ENCODE measurements at regions of chr2 and their contacts with region 1.

Region 1: GRCh38 chr2:200963124-200963917 is at the start of gene ORC2:
- DNase-seq: peak; percentile 96
- ATAC-seq: peak; percentile 96
- H3K4me3 ChIP-seq: peak within 1 kb of the TSS; percentile 79 to 96 (median 86)
- H3K27ac ChIP-seq: peak within 1 kb of the TSS; percentile 85
- H3K4me1 ChIP-seq: peaks cover 52% of the 10 kb centered on the region
- H3K27me3 ChIP-seq: no peaks in the 10 kb centered on the region; a peak in 1 of 5 replicates
- CTCF ChIP-seq: peak; percentile 92
- EP300 ChIP-seq: peak in 1 of 2 experiments; percentile 30; a peak in 2 of 4 replicates
- POLR2A ChIP-seq: peak; percentile 74 to 85
- RAD21 ChIP-seq: peak; percentile 77
- total RNA-seq, gene ORC2: 58.3 and 73.5 TPM in 2 replicates

Region 2: GRCh38 chr2:200864176-200864976 is 98.9 kb before region 1 on chr2 and contains the start of gene CLK1:
- CTCF ChIA-PET with region 1: no interaction called
- POLR2A ChIA-PET with region 1: interaction called, 22 read pairs
- in situ Hi-C with region 1: no loop called
- intact Hi-C with region 1: no loop called
- DNase-seq: peak; percentile 89
- ATAC-seq: peak; percentile 80
- H3K4me3 ChIP-seq: peak within 1 kb of the TSS; percentile 91 to 99 (median 97)
- H3K27ac ChIP-seq: peak within 1 kb of the TSS; percentile 98
- H3K4me1 ChIP-seq: peaks cover 55% of the 10 kb centered on the region
- H3K27me3 ChIP-seq: no peaks in the 10 kb centered on the region; a peak in 1 of 5 replicates
- CTCF ChIP-seq: no peak; the same call in 1 of the 2 replicates
- EP300 ChIP-seq: peak; percentile 27 to 54; a peak in 2 of 4 replicates
- POLR2A ChIP-seq: peak; percentile 99 to 100
- RAD21 ChIP-seq: peak; percentile 54
- total RNA-seq, gene CLK1: 35.2 and 66.6 TPM in 2 replicates

Region 3: DNA sequence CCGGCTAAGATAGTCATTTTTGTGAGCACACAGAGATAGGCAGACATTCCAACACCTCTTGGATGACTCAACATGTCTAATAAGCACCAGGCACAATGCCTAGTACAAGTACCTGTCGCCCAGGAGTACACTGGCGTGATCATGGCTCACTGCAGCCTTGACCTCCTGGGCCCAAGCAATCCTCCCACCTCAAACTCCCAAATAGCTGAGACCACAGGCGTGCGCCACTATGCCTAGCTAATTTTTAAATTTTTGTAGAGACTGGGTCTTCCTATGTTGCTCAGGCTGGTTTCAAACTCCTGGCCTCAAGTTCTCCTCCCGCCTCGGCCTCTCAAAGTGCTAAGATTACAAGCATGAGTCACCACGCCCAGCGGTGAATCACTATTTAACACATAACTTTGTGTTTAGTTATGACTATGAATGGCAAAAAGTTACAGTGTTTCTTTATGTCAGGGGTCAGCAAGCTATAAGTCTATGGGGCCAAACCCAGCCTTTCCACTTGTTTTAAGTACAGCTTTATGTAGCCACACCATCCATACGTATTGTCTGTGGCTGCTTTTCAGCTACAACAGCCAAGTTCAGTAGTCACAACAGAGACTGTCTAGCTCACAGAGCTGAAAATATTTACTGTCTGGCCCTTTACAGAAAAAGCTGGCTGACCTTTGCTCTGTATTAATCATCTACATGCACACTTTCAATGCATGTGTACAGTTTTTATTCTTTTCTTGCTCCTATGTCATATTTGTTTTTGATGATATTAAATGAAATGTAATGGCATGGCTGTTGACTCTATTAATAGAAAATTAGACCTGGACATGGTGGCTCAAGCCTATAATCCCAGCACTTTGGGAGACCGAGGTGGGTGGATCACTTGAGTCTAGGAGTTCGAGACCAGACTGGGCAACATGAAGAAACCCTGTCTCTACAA is 18.6 kb before region 1 on chr2:
- CTCF ChIA-PET with region 1: no interaction called
- POLR2A ChIA-PET with region 1: interaction called, 41 read pairs
- in situ Hi-C with region 1: no loop called
- intact Hi-C with region 1: no loop called
- DNase-seq: peak; percentile 82
- ATAC-seq: peak; percentile 93
- H3K4me3 ChIP-seq: no peak overlapping the region
- H3K27ac ChIP-seq: peak overlapping the region; percentile 17
- H3K4me1 ChIP-seq: peaks cover 20% of the 10 kb centered on the region
- H3K27me3 ChIP-seq: no peaks in the 10 kb centered on the region
- CTCF ChIP-seq: no peak
- EP300 ChIP-seq: 0 out of 4 replicates have a peak, but pooled peaks of 1 of the 2 experiments have one; percentile 24
- POLR2A ChIP-seq: no peak
- RAD21 ChIP-seq: no peak

Region 4: DNA sequence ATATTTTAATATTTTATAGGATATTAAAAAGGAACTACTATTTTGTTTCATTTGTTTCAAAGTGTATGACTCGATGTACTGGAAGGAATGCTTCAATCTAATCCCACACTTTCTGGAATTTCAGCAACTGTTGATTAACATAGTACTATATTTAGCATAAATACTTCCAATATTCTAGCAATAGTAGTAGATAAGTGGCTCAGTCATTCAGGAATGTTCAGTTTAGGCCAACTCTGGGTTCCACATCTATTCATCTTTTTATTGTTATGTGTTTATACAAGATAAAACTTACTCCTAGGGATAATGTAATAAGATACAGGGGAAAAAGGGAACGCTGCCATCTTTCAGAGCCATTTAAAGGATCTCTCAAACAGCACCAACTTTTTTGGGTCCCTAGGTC is 22.5 kb after region 1 on chr2:
- CTCF ChIA-PET with region 1: no interaction called
- POLR2A ChIA-PET with region 1: interaction called, 16 read pairs
- in situ Hi-C with region 1: no loop called
- intact Hi-C with region 1: no loop called
- DNase-seq: no peak
- ATAC-seq: no peak
- H3K4me3 ChIP-seq: no peak overlapping the region
- H3K27ac ChIP-seq: no peak overlapping the region
- H3K4me1 ChIP-seq: no peaks in the 10 kb centered on the region
- H3K27me3 ChIP-seq: no peaks in the 10 kb centered on the region
- CTCF ChIP-seq: no peak
- EP300 ChIP-seq: no peak
- POLR2A ChIP-seq: no peak
- RAD21 ChIP-seq: no peak

Region 5: GRCh38 chr2:201057087-201057521 is 93.8 kb after region 1 on chr2:
- CTCF ChIA-PET with region 1: no interaction called
- POLR2A ChIA-PET with region 1: interaction called, 9 read pairs
- in situ Hi-C with region 1: no loop called
- intact Hi-C with region 1: loop called (anchors 2 kb)
- DNase-seq: peak; percentile 32
- ATAC-seq: no peak
- H3K4me3 ChIP-seq: no peak overlapping the region; a peak in 1 of 6 replicates
- H3K27ac ChIP-seq: peak overlapping the region; percentile 68
- H3K4me1 ChIP-seq: peaks cover 46% of the 10 kb centered on the region
- H3K27me3 ChIP-seq: no peaks in the 10 kb centered on the region
- CTCF ChIP-seq: no peak
- EP300 ChIP-seq: no peak
- POLR2A ChIP-seq: no peak
- RAD21 ChIP-seq: no peak

Region 6: GRCh38 chr2:201118121-201118960 is 155.0 kb after region 1 on chr2:
- CTCF ChIA-PET with region 1: no interaction called
- POLR2A ChIA-PET with region 1: interaction called, 23 read pairs
- in situ Hi-C with region 1: no loop called
- intact Hi-C with region 1: no loop called
- DNase-seq: peak; percentile 88
- ATAC-seq: peak; percentile 47
- H3K4me3 ChIP-seq: peak overlapping the region; percentile 86 to 90 (median 86)
- H3K27ac ChIP-seq: peak overlapping the region; percentile 91
- H3K4me1 ChIP-seq: peaks cover 68% of the 10 kb centered on the region
- H3K27me3 ChIP-seq: no peaks in the 10 kb centered on the region; a peak in 2 of 5 replicates
- CTCF ChIP-seq: peak; percentile 78
- EP300 ChIP-seq: no peak; a peak in 1 of 4 replicates
- POLR2A ChIP-seq: peak; percentile 61 to 68
- RAD21 ChIP-seq: peak; percentile 68